ENCODE measurements at regions of chr14 and their contacts with region 1.

Region 1: DNA sequence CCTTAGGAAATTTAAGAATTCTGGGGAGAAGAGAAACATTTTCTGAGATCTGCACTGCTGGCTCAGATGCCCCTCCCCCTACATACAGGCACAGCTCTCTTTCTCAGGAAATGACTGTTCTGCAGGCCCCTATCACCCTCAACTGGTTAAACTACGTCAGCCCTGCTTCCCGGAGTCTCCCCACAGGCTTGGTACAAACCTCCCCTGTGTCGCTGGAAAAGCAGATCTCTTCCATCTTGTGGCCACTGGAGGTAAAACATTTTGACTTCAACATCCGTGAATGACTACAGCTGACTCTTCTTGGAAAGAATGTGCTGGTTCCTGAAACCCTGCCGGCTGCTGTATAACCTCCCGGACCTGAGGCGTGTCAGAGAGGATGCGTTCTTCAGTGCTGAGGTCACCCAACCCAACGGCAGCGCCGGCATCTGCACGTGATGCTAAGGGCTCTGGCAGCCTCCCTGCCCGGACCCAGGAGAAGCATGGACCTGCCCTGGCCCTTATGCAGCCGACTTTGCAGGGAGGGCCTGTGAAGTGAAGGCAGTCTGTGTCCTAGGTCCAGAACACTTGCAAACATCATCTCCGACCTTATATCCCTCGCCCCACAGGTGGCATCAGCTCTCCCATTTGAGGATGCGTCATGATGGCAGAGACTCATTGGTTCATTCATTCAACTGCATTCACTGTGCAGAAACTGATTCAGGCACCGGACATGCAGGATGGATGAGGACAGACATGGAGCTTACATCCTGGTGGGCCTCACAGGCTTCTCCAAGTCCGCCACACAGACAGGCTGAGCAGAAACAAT is 129.3 kb downstream of the GCH1 start:
- DNase-seq: peak; percentile 83
- ATAC-seq: peak; percentile 88
- H3K4me3 ChIP-seq: no peak overlapping the region
- H3K27ac ChIP-seq: peak overlapping the region; percentile 77
- H3K4me1 ChIP-seq: peaks cover 26% of the 10 kb centered on the region
- H3K27me3 ChIP-seq: no peaks in the 10 kb centered on the region
- CTCF ChIP-seq: peak; percentile 66

Region 2: GRCh38 chr14:54566410-54567223 is 206.8 kb before region 1 on chr14 and contains the start of gene SAMD4A:
- intact Hi-C with region 1: loop called (anchors 5 kb)
- DNase-seq: peak; percentile 86
- ATAC-seq: peak; percentile 48
- H3K4me3 ChIP-seq: peak within 1 kb of the TSS; percentile 72
- H3K27ac ChIP-seq: peak within 1 kb of the TSS; percentile 94
- H3K4me1 ChIP-seq: peaks cover 26% of the 10 kb centered on the region
- H3K27me3 ChIP-seq: no peaks in the 10 kb centered on the region
- CTCF ChIP-seq: peak; percentile 34
- total RNA-seq, gene SAMD4A: 39.1 TPM

Region 3: GRCh38 chr14:54691525-54692283 is 81.7 kb before region 1 on chr14:
- intact Hi-C with region 1: no loop called
- DNase-seq: peak; percentile 83
- ATAC-seq: peak; percentile 95
- H3K4me3 ChIP-seq: no peak overlapping the region
- H3K27ac ChIP-seq: peak overlapping the region; percentile 32
- H3K4me1 ChIP-seq: peaks cover 23% of the 10 kb centered on the region
- H3K27me3 ChIP-seq: no peaks in the 10 kb centered on the region
- CTCF ChIP-seq: peak; percentile 88

Region 4: GRCh38 chr14:54839701-54840119 is 66.3 kb after region 1 on chr14:
- intact Hi-C with region 1: no loop called
- DNase-seq: no peak
- ATAC-seq: peak; percentile 89
- H3K4me3 ChIP-seq: no peak overlapping the region
- H3K27ac ChIP-seq: no peak overlapping the region
- H3K4me1 ChIP-seq: peaks cover 12% of the 10 kb centered on the region
- H3K27me3 ChIP-seq: no peaks in the 10 kb centered on the region
- CTCF ChIP-seq: no peak

Region 5: GRCh38 chr14:54866588-54866987 is 93.2 kb after region 1 on chr14:
- intact Hi-C with region 1: no loop called
- DNase-seq: no peak
- ATAC-seq: no peak
- H3K4me3 ChIP-seq: no peak overlapping the region
- H3K27ac ChIP-seq: no peak overlapping the region
- H3K4me1 ChIP-seq: peaks cover 10% of the 10 kb centered on the region
- H3K27me3 ChIP-seq: no peaks in the 10 kb centered on the region
- CTCF ChIP-seq: no peak

Measured in upper lobe of right lung (tissue), 1 donor.